ENCODE measurements at regions of chr4 and their contacts with region 1.

Region 1: DNA sequence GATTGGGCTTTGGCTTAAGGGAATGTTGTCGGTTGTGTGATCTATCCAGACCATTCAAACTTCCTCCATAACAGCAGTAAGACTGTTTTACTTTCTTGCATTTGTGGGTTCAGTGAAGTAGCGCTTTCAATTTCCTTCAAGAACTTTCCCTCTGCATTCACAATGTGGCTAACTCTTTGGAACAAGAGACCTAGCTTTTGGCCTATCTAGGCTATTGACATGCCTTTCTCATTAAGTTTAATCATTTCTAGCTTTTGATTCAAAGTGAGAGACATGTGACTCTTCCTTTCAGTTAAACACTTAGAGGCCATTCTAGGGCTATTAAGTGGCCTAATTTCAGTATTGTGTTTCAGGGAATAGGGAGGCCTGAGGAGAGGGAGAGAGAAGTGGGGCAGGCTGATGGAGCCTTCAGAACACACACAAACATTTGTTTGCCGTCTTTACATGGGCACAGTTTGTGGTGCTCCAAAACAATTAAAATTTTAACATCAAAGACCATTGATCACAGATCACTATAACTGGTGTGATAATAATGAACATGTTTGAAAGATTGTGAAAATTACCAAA is 34.1 kb downstream of the ADH5 start:
- DNase-seq: no peak
- H3K4me3 ChIP-seq: no peak overlapping the region
- H3K27ac ChIP-seq: no peak overlapping the region
- H3K4me1 ChIP-seq: peaks cover 0 to 4% (median 0%) of the 10 kb centered on the region in 4 experiments
- H3K27me3 ChIP-seq: no peaks in the 10 kb centered on the region

Region 2: DNA sequence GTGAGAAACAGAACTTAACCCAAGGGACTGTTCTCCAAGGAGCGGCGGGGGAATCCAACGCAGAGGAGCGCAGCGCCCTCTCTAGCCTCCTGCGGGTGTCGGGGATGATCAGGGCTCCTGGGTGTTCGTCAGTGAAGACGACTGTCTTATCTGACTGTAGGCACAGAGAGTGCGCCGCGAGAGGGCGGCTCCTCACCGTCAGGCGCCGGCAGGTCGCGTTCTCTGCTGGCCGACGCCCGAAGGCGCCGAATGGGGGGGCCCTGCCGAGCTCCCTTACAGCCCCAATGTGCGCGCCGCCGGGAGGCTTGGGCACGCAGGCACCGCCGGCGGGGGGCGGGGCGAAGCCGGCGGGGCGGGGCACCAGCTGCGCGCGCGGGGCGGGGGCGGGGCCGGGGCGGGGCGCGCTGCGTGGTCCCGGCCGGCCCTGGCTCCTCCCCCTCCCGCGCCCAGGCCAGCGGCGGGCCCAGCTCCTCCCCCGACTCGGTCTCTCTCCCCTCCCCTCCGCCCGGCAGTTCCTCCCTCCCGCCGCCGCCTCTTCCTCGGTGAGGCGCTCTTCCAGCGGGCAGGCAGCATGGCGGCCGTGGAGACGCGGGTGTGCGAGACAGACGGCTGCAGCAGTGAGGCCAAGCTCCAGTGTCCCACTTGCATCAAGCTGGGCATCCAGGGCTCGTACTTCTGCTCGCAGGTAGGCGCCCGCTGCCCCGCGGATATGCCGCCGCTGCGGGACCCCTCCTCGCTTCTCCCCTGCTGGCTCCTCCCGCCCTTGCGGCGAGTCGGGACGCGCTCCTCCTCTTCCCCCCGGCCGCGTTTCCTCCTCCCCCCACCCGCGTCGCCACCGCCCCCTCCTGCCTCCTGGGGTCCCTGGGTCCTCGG is 59.1 kb before region 1 on chr4 and contains the start of gene METAP1:
- CTCF ChIA-PET with region 1: interaction called, 127 read pairs
- POLR2A ChIA-PET with region 1: no interaction called
- DNase-seq: peak; percentile 98
- H3K4me3 ChIP-seq: peak within 1 kb of the TSS; percentile 81 to 97 (median 92)
- H3K27ac ChIP-seq: peak within 1 kb of the TSS; percentile 67 to 86
- H3K4me1 ChIP-seq: peaks cover 4 to 22% (median 10%) of the 10 kb centered on the region in 4 experiments
- H3K27me3 ChIP-seq: no peaks in the 10 kb centered on the region

Region 3: GRCh38 chr4:99067617-99068016 is 13.1 kb after region 1 on chr4:
- CTCF ChIA-PET with region 1: interaction called, 18 read pairs
- POLR2A ChIA-PET with region 1: no interaction called
- DNase-seq: no peak
- H3K4me3 ChIP-seq: no peak overlapping the region
- H3K27ac ChIP-seq: no peak overlapping the region
- H3K4me1 ChIP-seq: no peaks in the 10 kb centered on the region
- H3K27me3 ChIP-seq: no peaks in the 10 kb centered on the region

Region 4: DNA sequence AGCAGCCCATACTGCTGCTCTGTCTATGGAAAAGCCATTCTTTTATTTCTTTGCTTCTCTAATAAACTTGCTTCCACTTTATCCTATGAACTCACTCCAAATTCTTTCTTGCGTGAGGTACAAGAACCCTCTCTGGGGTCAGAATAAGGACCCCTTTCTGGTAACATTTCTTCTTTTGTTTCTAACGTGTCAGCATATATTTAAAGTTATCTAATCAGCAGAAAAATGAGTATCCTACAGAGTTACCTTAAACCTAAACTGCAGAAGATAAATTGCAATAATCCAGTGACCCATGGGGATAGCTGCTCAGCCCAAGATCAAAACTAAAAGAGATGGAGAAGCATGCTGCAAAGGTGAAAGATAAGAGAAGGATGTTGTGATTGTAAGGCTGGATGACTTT is 30.1 kb after region 1 on chr4:
- CTCF ChIA-PET with region 1: interaction called, 15 read pairs
- POLR2A ChIA-PET with region 1: no interaction called
- DNase-seq: no peak
- H3K4me3 ChIP-seq: no peak overlapping the region
- H3K27ac ChIP-seq: no peak overlapping the region
- H3K4me1 ChIP-seq: peaks cover 4 to 13% (median 9%) of the 10 kb centered on the region in 4 experiments
- H3K27me3 ChIP-seq: no peaks in the 10 kb centered on the region